ENCODE measurements at regions of chr1 and their contacts with region 1.

Region 1: GRCh38 chr1:181134543-181135362 is 46.3 kb downstream of the IER5 start:
- DNase-seq: peak; percentile 83
- ATAC-seq: peak; percentile 82
- H3K4me3 Mint-ChIP-seq: peak overlapping the region; percentile 63
- H3K27ac Mint-ChIP-seq: peak overlapping the region; percentile 93
- H3K4me1 Mint-ChIP-seq: peaks cover 65% of the 10 kb centered on the region
- H3K27me3 Mint-ChIP-seq: peaks cover 6% of the 10 kb centered on the region
- CTCF ChIP-seq: no peak

Region 2: DNA sequence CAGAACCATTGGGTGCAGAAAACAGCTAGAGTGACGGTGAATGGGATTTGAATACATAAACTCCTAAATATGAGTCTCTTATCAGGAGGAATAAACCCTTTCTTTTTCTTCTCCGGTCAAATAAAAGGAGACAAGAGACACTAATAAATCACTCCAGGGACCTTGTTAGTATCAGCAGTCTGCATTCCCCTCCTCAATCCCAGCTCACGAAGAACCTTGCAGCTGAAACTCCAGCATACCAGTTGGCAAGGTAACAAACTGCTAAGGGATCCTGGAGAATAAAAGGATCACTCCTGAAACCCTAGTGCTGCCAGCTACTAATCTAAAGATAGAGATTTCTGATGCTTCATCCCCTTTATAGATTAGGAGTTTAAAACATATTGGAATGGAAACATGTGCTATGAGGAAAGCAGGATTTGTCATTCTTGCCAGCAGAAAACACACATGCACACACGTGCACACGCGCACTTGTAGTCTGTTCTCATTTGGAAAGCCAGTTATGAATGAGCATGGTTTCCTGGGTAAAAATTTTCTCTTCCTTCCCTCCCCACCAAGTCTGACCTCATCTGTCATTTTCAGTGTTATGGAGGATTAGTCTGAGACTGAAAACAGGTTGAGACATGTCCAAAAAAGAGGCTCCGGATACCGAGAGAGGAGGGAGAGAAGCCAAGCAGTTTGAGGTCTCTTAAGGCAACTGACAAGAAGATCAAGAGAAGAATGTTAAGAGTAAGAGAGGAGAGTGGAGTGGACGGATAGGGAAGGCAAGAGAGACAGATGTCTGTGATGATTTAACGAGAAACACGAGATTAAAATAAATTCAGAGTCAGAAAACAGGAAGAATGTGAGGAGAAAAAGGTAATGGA is 35.4 kb before region 1 on chr1:
- CTCF ChIA-PET with region 1: interaction called, 58 read pairs
- POLR2A ChIA-PET with region 1: interaction called, 45 read pairs
- intact Hi-C with region 1: loop called (anchors 2 kb)
- DNase-seq: peak; percentile 69
- ATAC-seq: peak; percentile 75
- H3K4me3 Mint-ChIP-seq: peak overlapping the region; percentile 56
- H3K27ac Mint-ChIP-seq: peak overlapping the region; percentile 96
- H3K4me1 Mint-ChIP-seq: peaks cover 78% of the 10 kb centered on the region
- H3K27me3 Mint-ChIP-seq: no peaks in the 10 kb centered on the region
- CTCF ChIP-seq: no peak

Measured in activated CD8-positive, alpha-beta T cell treated with anti-CD3 and anti-CD28 coated beads for 36 hours (primary cell).